ENCODE measurements at regions of chr20 and their contacts with region 1.

Region 1: GRCh38 chr20:52047811-52048764 is 143.5 kb downstream of the ZFP64 start:
- DNase-seq: peak; percentile 38
- H3K4me3 Mint-ChIP-seq: peak overlapping the region; percentile 48
- H3K27ac Mint-ChIP-seq: peak overlapping the region; percentile 84
- H3K4me1 Mint-ChIP-seq: peaks cover 34% of the 10 kb centered on the region
- H3K27me3 Mint-ChIP-seq: peaks cover 1% of the 10 kb centered on the region

Region 2: DNA sequence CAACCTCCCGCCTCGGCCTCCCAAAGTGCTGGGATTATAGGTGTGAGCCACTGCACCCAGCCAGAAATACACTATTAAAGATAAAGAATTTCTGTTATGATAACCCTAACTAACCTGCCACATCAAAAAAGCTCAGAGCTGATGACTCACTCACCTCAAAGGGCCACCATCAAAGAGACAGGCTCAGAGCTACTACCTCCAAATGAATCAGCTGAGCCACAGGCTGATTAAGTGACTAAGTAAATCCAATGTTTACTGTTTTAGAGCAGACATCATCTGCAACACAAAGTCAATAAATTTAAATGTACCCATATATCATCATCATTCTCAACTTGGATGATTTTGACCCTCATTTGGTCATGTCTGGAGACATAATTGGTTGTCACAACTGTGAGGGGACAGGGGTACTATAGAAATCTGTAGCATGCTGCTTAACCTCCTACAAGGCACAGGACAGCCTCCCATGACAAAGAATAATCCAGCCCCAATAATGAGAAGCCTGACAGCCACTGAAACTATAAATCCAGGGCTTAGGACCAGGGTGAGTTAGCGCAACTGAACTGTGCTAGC is 386.4 kb before region 1 on chr20:
- intact Hi-C with region 1: loop called (anchors 1 kb)
- DNase-seq: peak; percentile 20
- H3K4me3 Mint-ChIP-seq: peak overlapping the region; percentile 5
- H3K27ac Mint-ChIP-seq: peak overlapping the region; percentile 58
- H3K4me1 Mint-ChIP-seq: peaks cover 24% of the 10 kb centered on the region
- H3K27me3 Mint-ChIP-seq: no peaks in the 10 kb centered on the region

Region 3: DNA sequence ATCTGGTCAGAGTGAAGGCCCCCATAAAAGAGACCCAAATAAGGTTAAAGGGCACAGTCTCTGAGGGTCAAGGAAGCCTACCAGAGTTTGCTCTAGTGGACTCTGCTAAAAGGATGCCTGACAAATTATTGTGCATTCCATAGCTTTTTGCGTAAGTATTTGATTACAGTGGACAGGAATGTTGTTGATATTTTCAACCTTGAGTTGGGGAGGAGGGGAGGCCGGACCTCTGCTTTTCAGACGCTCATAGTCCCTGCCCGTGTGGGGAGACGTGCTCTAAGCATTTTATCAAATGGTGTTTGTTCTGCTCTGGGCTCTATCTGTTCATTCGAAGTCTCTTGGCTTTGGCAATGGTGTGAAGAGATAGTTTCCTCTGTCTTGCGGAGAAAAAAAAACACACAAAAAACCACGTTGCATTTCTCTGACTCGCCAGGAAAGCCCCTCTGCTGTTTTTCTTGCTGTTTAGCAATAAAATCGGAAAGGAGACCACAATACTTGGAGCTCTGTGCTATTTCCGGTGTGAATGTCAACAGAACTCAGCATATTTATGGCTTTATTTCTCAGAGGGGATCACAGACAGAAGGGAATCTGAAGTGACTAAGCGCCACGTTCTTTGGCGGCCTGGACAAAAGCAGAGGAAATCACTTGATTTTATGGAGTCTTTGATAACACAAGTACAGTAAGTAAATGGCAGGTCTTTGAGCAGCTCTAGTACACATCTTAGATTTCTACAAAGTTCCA is 16.4 kb before region 1 on chr20:
- intact Hi-C with region 1: loop called (anchors 1 kb)
- DNase-seq: peak; percentile 48
- H3K4me3 Mint-ChIP-seq: peak overlapping the region; percentile 40
- H3K27ac Mint-ChIP-seq: peak overlapping the region; percentile 82
- H3K4me1 Mint-ChIP-seq: peaks cover 31% of the 10 kb centered on the region
- H3K27me3 Mint-ChIP-seq: no peaks in the 10 kb centered on the region